ENCODE measurements at regions of chr6 and their contacts with region 1.

Region 1: DNA sequence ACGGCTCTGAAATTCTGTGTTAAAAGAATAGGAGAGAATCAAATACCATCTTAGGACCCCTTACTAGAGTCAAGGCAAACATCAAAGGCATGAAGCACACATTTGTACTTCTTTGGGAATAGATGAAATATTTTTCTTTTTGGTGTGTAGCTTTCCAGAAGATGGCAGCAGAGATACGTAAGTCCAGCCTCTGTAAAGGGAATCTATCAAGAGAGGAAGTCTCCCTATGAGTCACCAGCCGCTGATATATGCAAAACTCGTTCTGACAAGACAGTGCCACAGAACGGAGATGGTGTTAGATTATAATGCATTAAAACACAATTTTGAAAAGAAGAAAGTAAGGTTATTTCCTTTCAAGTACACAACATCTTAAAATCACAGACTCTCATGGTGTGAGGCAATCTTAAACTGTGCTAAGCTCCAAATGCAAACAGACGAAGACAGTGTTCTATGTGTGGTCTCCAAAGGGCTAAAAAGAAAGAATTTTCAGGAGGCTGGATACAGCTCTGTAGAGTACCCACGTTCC is 120.0 kb upstream of the AGPAT4 start:
- DNase-seq: peak; percentile 82
- H3K4me3 ChIP-seq: no peak overlapping the region
- H3K27ac ChIP-seq: no peak overlapping the region
- H3K4me1 ChIP-seq: peaks cover 18% of the 10 kb centered on the region
- H3K27me3 ChIP-seq: no peaks in the 10 kb centered on the region
- CTCF ChIP-seq: peak; percentile 53 to 68

Region 2: DNA sequence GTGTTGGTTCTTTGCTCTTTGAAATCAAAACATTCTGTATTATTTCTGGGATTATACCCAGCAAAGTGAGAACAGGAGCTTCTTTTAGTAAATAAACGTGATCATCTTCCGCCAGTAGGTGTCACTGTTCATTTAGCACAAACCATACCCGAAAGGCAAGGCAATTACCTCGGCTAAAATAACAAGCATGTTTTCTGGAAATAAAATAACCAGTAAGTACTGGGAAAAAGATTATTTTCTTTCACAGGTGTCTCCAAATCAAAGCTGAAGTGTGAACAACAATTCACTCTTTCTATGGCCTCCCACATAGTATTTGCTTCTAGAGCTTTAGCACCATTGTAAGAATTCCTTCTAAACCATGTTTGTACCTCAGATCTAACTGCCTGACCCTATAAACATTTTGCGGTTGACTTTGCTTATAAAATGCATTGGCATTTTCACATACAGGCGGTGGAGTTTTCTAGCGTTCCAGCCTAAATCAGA is 24.6 kb after region 1 on chr6:
- CTCF ChIA-PET with region 1: no interaction called
- dilution Hi-C with region 1: no loop called
- in situ Hi-C with region 1: no loop called
- intact Hi-C with region 1: loop called (anchors 1 kb)
- DNase-seq: peak; percentile 61
- H3K4me3 ChIP-seq: no peak overlapping the region
- H3K27ac ChIP-seq: no peak overlapping the region
- H3K4me1 ChIP-seq: peaks cover 3% of the 10 kb centered on the region
- H3K27me3 ChIP-seq: no peaks in the 10 kb centered on the region
- CTCF ChIP-seq: peak; percentile 60 to 67

Region 3: DNA sequence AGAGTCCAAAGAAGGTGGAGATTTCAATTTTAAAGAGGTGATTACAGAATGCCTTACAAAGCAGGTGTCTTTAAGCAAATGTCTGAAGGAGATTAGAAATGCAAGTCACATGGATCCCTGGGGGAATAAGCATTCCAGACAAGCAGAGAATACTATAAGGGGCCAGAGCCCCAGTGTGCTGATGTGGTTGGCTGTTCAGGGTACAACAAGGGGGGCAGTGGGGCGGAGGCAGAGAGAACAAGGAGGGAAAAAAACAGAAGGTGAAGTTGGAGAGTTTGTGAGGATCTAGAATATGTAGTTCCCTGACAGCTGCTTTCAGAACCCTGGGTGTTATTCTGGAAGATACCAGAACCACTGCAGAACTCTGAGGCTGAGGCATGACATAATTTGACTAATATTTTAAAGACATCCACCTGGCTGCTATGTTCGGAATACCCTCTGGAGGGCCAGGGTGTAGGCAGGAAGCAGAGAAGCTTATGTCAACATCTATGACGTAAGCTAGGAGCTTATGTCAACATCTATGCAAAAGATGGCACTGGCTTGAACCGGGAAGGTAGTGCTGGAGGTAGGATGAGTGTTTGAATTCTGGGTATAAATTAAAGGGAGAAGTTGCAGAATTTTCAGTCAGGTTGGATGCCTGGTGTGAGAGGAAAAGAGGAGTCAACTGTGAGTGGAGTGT is 156.2 kb after region 1 on chr6:
- CTCF ChIA-PET with region 1: no interaction called
- dilution Hi-C with region 1: no loop called
- in situ Hi-C with region 1: no loop called
- intact Hi-C with region 1: no loop called
- DNase-seq: peak; percentile 1
- H3K4me3 ChIP-seq: no peak overlapping the region
- H3K27ac ChIP-seq: no peak overlapping the region
- H3K4me1 ChIP-seq: no peaks in the 10 kb centered on the region
- H3K27me3 ChIP-seq: no peaks in the 10 kb centered on the region
- CTCF ChIP-seq: peak in 1 of 2 donors; percentile 13

Region 4: GRCh38 chr6:161618831-161619454 is 225.0 kb after region 1 on chr6:
- CTCF ChIA-PET with region 1: no interaction called
- dilution Hi-C with region 1: no loop called
- in situ Hi-C with region 1: no loop called
- intact Hi-C with region 1: loop called (anchors 5 kb)
- DNase-seq: peak; percentile 35
- H3K4me3 ChIP-seq: peak overlapping the region in 1 of 3 experiments; percentile 14
- H3K27ac ChIP-seq: no peak overlapping the region
- H3K4me1 ChIP-seq: no peaks in the 10 kb centered on the region
- H3K27me3 ChIP-seq: no peaks in the 10 kb centered on the region
- CTCF ChIP-seq: peak; percentile 36 to 70

Region 5: GRCh38 chr6:161748535-161749416 is 354.9 kb after region 1 on chr6:
- CTCF ChIA-PET with region 1: no interaction called
- dilution Hi-C with region 1: no loop called
- in situ Hi-C with region 1: no loop called
- intact Hi-C with region 1: no loop called
- DNase-seq: no peak
- H3K4me3 ChIP-seq: no peak overlapping the region
- H3K27ac ChIP-seq: no peak overlapping the region
- H3K4me1 ChIP-seq: no peaks in the 10 kb centered on the region
- H3K27me3 ChIP-seq: no peaks in the 10 kb centered on the region
- CTCF ChIP-seq: peak in 1 of 2 donors; percentile 46

Region 6: GRCh38 chr6:162727309-162728182 is 1333.6 kb after region 1 on chr6 and contains the starts of genes PACRG and PRKN:
- CTCF ChIA-PET with region 1: no interaction called
- dilution Hi-C with region 1: no loop called
- in situ Hi-C with region 1: no loop called
- intact Hi-C with region 1: loop called (anchors 10 kb)
- DNase-seq: peak; percentile 97
- H3K4me3 ChIP-seq: peak within 1 kb of the TSS; percentile 61 to 95 (median 73)
- H3K27ac ChIP-seq: peak within 1 kb of the TSS; percentile 59
- H3K4me1 ChIP-seq: no peaks in the 10 kb centered on the region
- H3K27me3 ChIP-seq: no peaks in the 10 kb centered on the region
- CTCF ChIP-seq: no peak
- total RNA-seq, gene PACRG: 1.0 TPM in 1 of 2 donors, not detected in the other
- total RNA-seq, gene PRKN: 1.0 to 1.3 TPM